WTC11 (cell line): ENCODE measurements at regions of chr2 and their contacts with region 1.

Region 1: GRCh38 chr2:38508311-38509039 is 94.3 kb downstream of the HNRNPLL start:
- DNase-seq: peak; percentile 93
- ATAC-seq: peak; percentile 91
- H3K4me3 Mint-ChIP-seq: no peak overlapping the region
- H3K27ac Mint-ChIP-seq: no peak overlapping the region
- H3K4me1 Mint-ChIP-seq: peaks cover 11% of the 10 kb centered on the region
- H3K27me3 Mint-ChIP-seq: peaks cover 17% of the 10 kb centered on the region
- CTCF ChIP-seq: peak; percentile 69

Region 2: GRCh38 chr2:38148501-38148900 is 360.0 kb before region 1 on chr2:
- CTCF ChIA-PET with region 1: no interaction called
- POLR2A ChIA-PET with region 1: no interaction called
- DNase-seq: no peak
- ATAC-seq: no peak
- H3K4me3 Mint-ChIP-seq: no peak overlapping the region
- H3K27ac Mint-ChIP-seq: no peak overlapping the region
- H3K4me1 Mint-ChIP-seq: peaks cover 12% of the 10 kb centered on the region
- H3K27me3 Mint-ChIP-seq: no peaks in the 10 kb centered on the region
- CTCF ChIP-seq: no peak

Region 3: GRCh38 chr2:38315707-38316333 is 192.7 kb before region 1 on chr2:
- CTCF ChIA-PET with region 1: interaction called, 50 read pairs
- POLR2A ChIA-PET with region 1: no interaction called
- DNase-seq: no peak
- ATAC-seq: peak; percentile 74
- H3K4me3 Mint-ChIP-seq: no peak overlapping the region
- H3K27ac Mint-ChIP-seq: peak overlapping the region; percentile 5; the same call in 1 of the 2 replicates
- H3K4me1 Mint-ChIP-seq: no peaks in the 10 kb centered on the region
- H3K27me3 Mint-ChIP-seq: no peaks in the 10 kb centered on the region
- CTCF ChIP-seq: peak; percentile 25; the same call in 1 of the 2 replicates

Region 4: DNA sequence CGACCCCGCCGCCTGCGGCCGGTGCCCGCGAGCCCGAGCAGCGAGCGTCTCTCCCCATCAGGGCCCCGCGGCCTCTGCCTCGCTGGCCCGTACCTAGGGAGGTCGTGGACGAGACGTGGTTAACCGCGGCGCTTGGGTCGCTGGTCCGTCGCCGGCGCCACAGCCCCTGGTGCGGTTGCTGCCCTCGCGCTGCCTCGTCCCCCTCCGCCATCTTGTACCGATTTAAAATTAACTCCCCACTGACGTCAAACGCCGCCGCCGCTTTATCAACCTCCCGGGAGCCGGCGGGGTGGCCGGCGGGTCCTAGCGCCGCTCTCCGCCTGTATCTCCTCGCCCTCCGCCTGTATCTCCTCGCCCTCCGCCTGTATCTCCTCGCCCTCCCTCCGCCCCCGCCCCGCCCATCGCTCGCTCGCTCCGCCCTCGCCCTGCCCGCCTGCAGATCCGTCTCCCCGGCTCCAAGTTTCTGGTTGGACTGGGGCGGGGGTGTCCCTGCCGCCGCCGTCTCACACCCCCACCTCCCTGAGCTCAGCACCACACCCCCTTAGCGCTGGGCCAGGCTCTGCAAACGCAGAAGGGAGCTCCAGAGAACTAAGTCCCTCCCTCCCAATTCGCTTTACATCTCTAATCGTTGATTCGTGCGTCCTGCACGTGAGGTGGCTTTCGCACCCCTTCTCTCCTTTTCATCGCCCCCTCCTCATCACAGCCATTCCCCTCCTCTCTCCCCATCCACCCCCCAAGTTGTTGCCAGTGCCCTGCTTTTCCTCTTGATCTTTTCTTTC is 131.2 kb before region 1 on chr2 and contains the start of gene ATL2:
- CTCF ChIA-PET with region 1: interaction called, 14 read pairs
- POLR2A ChIA-PET with region 1: interaction called, 3 read pairs
- DNase-seq: peak; percentile 97
- ATAC-seq: peak; percentile 90
- H3K4me3 Mint-ChIP-seq: peak within 1 kb of the TSS; percentile 94
- H3K27ac Mint-ChIP-seq: peak within 1 kb of the TSS; percentile 100
- H3K4me1 Mint-ChIP-seq: peaks cover 44% of the 10 kb centered on the region
- H3K27me3 Mint-ChIP-seq: no peaks in the 10 kb centered on the region
- CTCF ChIP-seq: no peak
- total RNA-seq, gene ATL2: 81.3 to 90.5 TPM (median 88.7 TPM) in 3 replicates

Region 5: DNA sequence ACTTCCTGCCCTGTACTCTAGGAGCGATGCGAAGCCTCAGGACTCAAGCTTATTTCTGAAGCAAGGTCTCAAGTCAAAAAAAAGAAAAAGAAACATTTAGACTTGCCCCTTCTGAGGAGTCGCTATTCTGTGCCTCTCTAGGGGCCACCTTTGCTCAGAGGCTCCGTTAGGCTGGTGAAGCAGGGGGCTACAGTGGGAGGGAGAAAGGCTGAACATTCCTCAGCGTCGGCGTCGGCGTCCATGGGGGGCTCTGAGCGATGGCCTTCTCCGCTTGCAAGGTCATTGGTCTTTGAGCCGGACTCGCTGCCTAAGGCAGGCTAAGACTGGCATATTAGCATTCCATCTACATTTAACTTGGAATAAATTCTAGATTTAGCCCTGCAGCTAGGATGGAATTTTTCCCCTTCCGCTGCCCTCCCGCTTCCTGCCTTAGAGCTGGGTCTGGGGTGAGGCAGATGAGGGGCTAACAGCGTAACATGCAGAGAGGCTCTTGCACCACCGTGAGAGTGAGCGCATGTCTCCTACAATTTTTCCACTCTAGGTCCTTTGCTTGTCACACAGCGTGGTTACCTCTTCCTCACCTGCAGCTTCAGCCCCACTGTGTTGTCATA is 77.8 kb before region 1 on chr2:
- CTCF ChIA-PET with region 1: interaction called, 12 read pairs
- POLR2A ChIA-PET with region 1: no interaction called
- DNase-seq: peak; percentile 17
- ATAC-seq: peak; percentile 12
- H3K4me3 Mint-ChIP-seq: no peak overlapping the region
- H3K27ac Mint-ChIP-seq: peak overlapping the region; percentile 72; the same call in 1 of the 2 replicates
- H3K4me1 Mint-ChIP-seq: peaks cover 55% of the 10 kb centered on the region
- H3K27me3 Mint-ChIP-seq: peaks cover 15% of the 10 kb centered on the region
- CTCF ChIP-seq: no peak

Region 6: GRCh38 chr2:38498045-38498481 is 10.4 kb before region 1 on chr2:
- CTCF ChIA-PET with region 1: interaction called, 19 read pairs
- POLR2A ChIA-PET with region 1: interaction called, 3 read pairs
- DNase-seq: no peak
- ATAC-seq: no peak
- H3K4me3 Mint-ChIP-seq: no peak overlapping the region
- H3K27ac Mint-ChIP-seq: no peak overlapping the region
- H3K4me1 Mint-ChIP-seq: peaks cover 25% of the 10 kb centered on the region
- H3K27me3 Mint-ChIP-seq: peaks cover 5% of the 10 kb centered on the region
- CTCF ChIP-seq: no peak

Region 7: GRCh38 chr2:38523728-38524437 is 15.4 kb after region 1 on chr2:
- CTCF ChIA-PET with region 1: interaction called, 24 read pairs
- POLR2A ChIA-PET with region 1: interaction called, 5 read pairs
- DNase-seq: peak; percentile 55
- ATAC-seq: peak; percentile 77
- H3K4me3 Mint-ChIP-seq: no peak overlapping the region
- H3K27ac Mint-ChIP-seq: no peak overlapping the region
- H3K4me1 Mint-ChIP-seq: peaks cover 32% of the 10 kb centered on the region
- H3K27me3 Mint-ChIP-seq: peaks cover 9% of the 10 kb centered on the region
- CTCF ChIP-seq: no peak

Region 8: GRCh38 chr2:38619458-38620164 is 111.1 kb after region 1 on chr2:
- CTCF ChIA-PET with region 1: no interaction called
- POLR2A ChIA-PET with region 1: no interaction called
- DNase-seq: no peak
- ATAC-seq: no peak
- H3K4me3 Mint-ChIP-seq: no peak overlapping the region
- H3K27ac Mint-ChIP-seq: no peak overlapping the region
- H3K4me1 Mint-ChIP-seq: peaks cover 12% of the 10 kb centered on the region
- H3K27me3 Mint-ChIP-seq: no peaks in the 10 kb centered on the region
- CTCF ChIP-seq: no peak